ENCODE measurements at regions of chr11 and their contacts with region 1.

Region 1: DNA sequence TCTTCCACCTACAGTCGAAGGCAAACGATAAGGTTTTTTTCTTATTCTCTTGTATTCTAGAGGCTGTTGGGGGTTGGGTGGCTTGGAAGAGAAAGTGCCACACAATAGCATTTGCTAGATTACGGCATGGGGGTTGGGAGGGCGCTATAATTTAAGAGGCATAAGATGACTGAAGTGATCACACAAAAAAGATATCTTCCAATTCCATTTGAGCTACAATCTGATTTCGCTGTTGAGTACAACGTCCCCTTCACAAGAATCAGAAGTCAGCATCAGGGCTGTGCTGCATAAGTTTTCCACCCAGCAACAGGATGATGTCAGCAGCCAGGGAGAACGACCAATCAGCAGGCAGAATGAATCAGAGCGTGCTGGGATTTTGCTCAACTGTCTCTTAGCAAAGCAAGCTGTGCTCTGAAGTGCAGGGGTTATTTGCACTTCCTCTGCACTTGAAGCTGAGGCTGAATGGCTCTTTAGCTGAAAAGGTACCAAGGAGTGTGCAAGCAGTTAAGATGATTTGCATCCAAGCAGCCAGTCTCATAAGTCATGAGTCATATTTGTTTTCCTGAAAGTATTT is 23.2 kb upstream of the SESN3 start:
- DNase-seq: peak; percentile 96
- ATAC-seq: peak; percentile 96
- H3K4me3 ChIP-seq: 0 out of 2 replicates have a peak overlapping the region, but pooled peaks have one; percentile 0
- H3K27ac ChIP-seq: peak overlapping the region; percentile 77
- H3K4me1 ChIP-seq: peaks cover 47% of the 10 kb centered on the region
- H3K27me3 ChIP-seq: no peaks in the 10 kb centered on the region
- CTCF ChIP-seq: no peak
- EP300 ChIP-seq: peak in 1 of 2 experiments; percentile 63; a peak in 2 of 4 replicates
- POLR2A ChIP-seq: peak; percentile 64
- RAD21 ChIP-seq: no peak

Region 2: GRCh38 chr11:93529707-93530467 is 1724.3 kb before region 1 on chr11:
- CTCF ChIA-PET with region 1: no interaction called
- POLR2A ChIA-PET with region 1: no interaction called
- RAD21 ChIA-PET with region 1: no interaction called
- SMC1A ChIA-PET with region 1: no interaction called
- in situ Hi-C with region 1: no loop called
- intact Hi-C with region 1: loop called (anchors 10 kb)
- DNase-seq: no peak
- ATAC-seq: peak; percentile 10
- H3K4me3 ChIP-seq: 0 out of 2 replicates have a peak overlapping the region, but pooled peaks have one; percentile 34
- H3K27ac ChIP-seq: peak overlapping the region; percentile 59
- H3K4me1 ChIP-seq: peaks cover 64% of the 10 kb centered on the region
- H3K27me3 ChIP-seq: no peaks in the 10 kb centered on the region
- CTCF ChIP-seq: no peak
- EP300 ChIP-seq: peak; percentile 29 to 64; a peak in 2 of 4 replicates
- POLR2A ChIP-seq: peak; percentile 35; the same call in 1 of the 2 replicates
- RAD21 ChIP-seq: no peak

Region 3: GRCh38 chr11:95212609-95213008 is 41.6 kb before region 1 on chr11:
- CTCF ChIA-PET with region 1: interaction called, 12 read pairs
- POLR2A ChIA-PET with region 1: no interaction called
- RAD21 ChIA-PET with region 1: interaction called, 3 read pairs
- SMC1A ChIA-PET with region 1: interaction called, 3 read pairs
- in situ Hi-C with region 1: no loop called
- intact Hi-C with region 1: no loop called
- DNase-seq: no peak
- ATAC-seq: no peak
- H3K4me3 ChIP-seq: no peak overlapping the region
- H3K27ac ChIP-seq: no peak overlapping the region
- H3K4me1 ChIP-seq: no peaks in the 10 kb centered on the region
- H3K27me3 ChIP-seq: no peaks in the 10 kb centered on the region
- CTCF ChIP-seq: no peak
- EP300 ChIP-seq: no peak
- POLR2A ChIP-seq: no peak
- RAD21 ChIP-seq: no peak

Region 4: DNA sequence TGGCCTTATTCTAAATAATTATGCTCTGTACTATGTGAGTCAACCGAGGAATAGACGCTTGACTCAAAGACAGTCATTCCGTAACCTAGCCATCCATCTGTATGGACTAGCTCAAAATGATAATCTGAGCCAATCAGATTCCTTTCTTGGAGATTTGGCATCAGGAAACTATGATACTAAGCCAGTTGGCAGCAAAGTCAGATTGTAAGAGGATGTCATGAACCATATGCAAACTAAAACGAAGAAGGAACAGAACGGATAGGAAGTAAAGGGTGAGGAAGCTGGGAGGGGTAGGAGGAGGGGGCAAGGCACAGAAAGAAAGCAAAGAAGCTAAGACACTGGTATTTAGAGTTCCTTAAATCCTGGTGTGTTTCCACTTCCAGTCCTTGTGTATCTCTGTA is 12.5 kb before region 1 on chr11:
- CTCF ChIA-PET with region 1: interaction called, 14 read pairs
- POLR2A ChIA-PET with region 1: interaction called, 55 read pairs
- RAD21 ChIA-PET with region 1: interaction called, 42 read pairs
- SMC1A ChIA-PET with region 1: interaction called, 91 read pairs
- in situ Hi-C with region 1: no loop called
- intact Hi-C with region 1: no loop called
- DNase-seq: no peak
- ATAC-seq: peak; percentile 88
- H3K4me3 ChIP-seq: peak overlapping the region; percentile 11; the same call in 1 of the 2 replicates
- H3K27ac ChIP-seq: peak overlapping the region; percentile 3; the same call in 1 of the 2 replicates
- H3K4me1 ChIP-seq: peaks cover 9% of the 10 kb centered on the region; the same call in 1 of the 2 replicates
- H3K27me3 ChIP-seq: no peaks in the 10 kb centered on the region
- CTCF ChIP-seq: no peak
- EP300 ChIP-seq: no peak
- POLR2A ChIP-seq: no peak
- RAD21 ChIP-seq: no peak

Region 5: DNA sequence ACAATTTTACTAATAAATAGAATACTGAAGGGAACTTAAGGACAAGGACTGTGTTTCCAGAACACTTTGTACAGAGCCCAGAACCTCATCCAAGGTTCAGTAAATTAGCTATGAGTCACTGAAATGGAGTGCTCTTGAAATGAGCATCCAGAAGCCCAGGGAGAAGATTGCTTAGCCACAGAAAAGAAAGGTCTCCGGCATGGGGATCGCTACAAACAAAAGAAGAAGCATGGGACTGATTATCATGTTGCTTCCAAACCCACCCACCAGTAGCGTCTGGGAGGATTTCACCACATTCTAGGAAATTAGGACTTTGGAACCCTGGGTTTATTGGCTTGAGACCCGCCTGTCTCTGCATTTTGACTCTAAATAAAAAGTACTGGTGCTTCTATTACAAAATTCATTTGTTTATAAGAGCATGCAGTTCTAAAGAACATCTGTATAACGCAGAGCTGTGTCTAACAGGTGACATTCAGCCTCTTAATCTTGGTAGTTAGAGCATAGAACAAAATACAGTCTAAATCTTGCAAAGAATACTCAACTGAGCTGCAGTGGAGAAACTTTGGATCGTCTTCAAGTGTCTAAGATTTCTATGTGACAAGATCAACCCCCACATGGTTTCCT is 12.6 kb after region 1 on chr11:
- CTCF ChIA-PET with region 1: no interaction called
- POLR2A ChIA-PET with region 1: interaction called, 11 read pairs
- RAD21 ChIA-PET with region 1: no interaction called
- SMC1A ChIA-PET with region 1: interaction called, 56 read pairs
- in situ Hi-C with region 1: no loop called
- intact Hi-C with region 1: no loop called
- DNase-seq: no peak
- ATAC-seq: no peak
- H3K4me3 ChIP-seq: no peak overlapping the region
- H3K27ac ChIP-seq: no peak overlapping the region
- H3K4me1 ChIP-seq: no peaks in the 10 kb centered on the region
- H3K27me3 ChIP-seq: no peaks in the 10 kb centered on the region
- CTCF ChIP-seq: no peak
- EP300 ChIP-seq: no peak
- POLR2A ChIP-seq: no peak
- RAD21 ChIP-seq: no peak

Region 6: DNA sequence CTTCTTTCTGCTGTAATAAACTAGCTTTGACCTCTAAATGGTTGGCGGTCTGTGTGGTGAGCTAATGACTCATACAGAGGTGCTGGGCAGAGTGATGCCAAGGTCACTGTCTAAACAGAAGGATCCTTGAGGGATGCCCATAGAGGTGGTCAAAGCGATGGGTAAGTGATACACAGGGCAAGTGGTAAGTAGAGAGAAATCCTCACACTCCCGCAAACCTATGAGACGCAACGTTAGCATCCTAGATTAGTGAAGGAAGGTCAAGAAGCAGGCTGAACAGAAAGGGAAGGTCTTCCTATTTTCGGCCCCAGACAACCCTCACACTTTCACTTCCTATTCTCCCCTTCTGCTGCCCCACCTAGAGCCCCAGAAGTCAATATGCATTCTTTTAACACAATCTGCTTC is 42.4 kb after region 1 on chr11:
- CTCF ChIA-PET with region 1: no interaction called
- POLR2A ChIA-PET with region 1: interaction called, 9 read pairs
- RAD21 ChIA-PET with region 1: interaction called, 24 read pairs
- SMC1A ChIA-PET with region 1: interaction called, 9 read pairs
- in situ Hi-C with region 1: no loop called
- intact Hi-C with region 1: loop called (anchors 2 kb)
- DNase-seq: peak; percentile 39
- ATAC-seq: peak; percentile 97
- H3K4me3 ChIP-seq: peak overlapping the region; percentile 24; the same call in 1 of the 2 replicates
- H3K27ac ChIP-seq: no peak overlapping the region
- H3K4me1 ChIP-seq: peaks cover 15% of the 10 kb centered on the region; the same call in 1 of the 2 replicates
- H3K27me3 ChIP-seq: no peaks in the 10 kb centered on the region; a peak in 4 of 4 replicates
- CTCF ChIP-seq: no peak
- EP300 ChIP-seq: no peak; a peak in 1 of 4 replicates
- POLR2A ChIP-seq: no peak
- RAD21 ChIP-seq: peak; percentile 9; the same call in 1 of the 2 replicates

Region 7: DNA sequence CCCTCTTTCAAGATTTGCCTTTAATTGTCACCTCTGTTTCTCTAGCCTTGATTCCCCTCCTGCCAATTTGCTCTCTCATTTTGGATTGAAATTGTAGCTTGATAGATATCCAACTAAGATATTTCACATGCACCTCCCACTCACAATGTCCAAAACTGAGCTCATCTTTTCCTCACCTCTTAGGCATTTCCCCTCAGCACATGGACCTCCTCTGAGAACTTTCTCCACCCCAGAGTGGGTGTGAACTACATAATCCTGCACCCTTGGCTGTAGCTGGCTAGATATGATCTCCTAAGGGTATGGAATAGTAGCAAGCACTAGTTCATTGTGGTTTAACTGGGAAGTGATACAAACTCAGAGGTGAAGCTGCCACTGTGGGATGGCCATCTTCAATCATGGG is 68.3 kb after region 1 on chr11:
- CTCF ChIA-PET with region 1: no interaction called
- POLR2A ChIA-PET with region 1: no interaction called
- RAD21 ChIA-PET with region 1: no interaction called
- SMC1A ChIA-PET with region 1: no interaction called
- in situ Hi-C with region 1: no loop called
- intact Hi-C with region 1: no loop called
- DNase-seq: no peak
- ATAC-seq: no peak
- H3K4me3 ChIP-seq: no peak overlapping the region
- H3K27ac ChIP-seq: no peak overlapping the region
- H3K4me1 ChIP-seq: no peaks in the 10 kb centered on the region
- H3K27me3 ChIP-seq: no peaks in the 10 kb centered on the region
- CTCF ChIP-seq: no peak
- EP300 ChIP-seq: no peak
- POLR2A ChIP-seq: no peak
- RAD21 ChIP-seq: no peak

Region 8: GRCh38 chr11:95478003-95478402 is 223.8 kb after region 1 on chr11:
- CTCF ChIA-PET with region 1: no interaction called
- POLR2A ChIA-PET with region 1: no interaction called
- RAD21 ChIA-PET with region 1: no interaction called
- SMC1A ChIA-PET with region 1: no interaction called
- in situ Hi-C with region 1: no loop called
- intact Hi-C with region 1: no loop called
- DNase-seq: no peak
- ATAC-seq: no peak
- H3K4me3 ChIP-seq: no peak overlapping the region
- H3K27ac ChIP-seq: no peak overlapping the region
- H3K4me1 ChIP-seq: no peaks in the 10 kb centered on the region
- H3K27me3 ChIP-seq: no peaks in the 10 kb centered on the region; a peak in 1 of 4 replicates
- CTCF ChIP-seq: no peak
- EP300 ChIP-seq: no peak
- POLR2A ChIP-seq: no peak
- RAD21 ChIP-seq: no peak